ENCODE measurements at regions of chr1 and their contacts with region 1.

Region 1: DNA sequence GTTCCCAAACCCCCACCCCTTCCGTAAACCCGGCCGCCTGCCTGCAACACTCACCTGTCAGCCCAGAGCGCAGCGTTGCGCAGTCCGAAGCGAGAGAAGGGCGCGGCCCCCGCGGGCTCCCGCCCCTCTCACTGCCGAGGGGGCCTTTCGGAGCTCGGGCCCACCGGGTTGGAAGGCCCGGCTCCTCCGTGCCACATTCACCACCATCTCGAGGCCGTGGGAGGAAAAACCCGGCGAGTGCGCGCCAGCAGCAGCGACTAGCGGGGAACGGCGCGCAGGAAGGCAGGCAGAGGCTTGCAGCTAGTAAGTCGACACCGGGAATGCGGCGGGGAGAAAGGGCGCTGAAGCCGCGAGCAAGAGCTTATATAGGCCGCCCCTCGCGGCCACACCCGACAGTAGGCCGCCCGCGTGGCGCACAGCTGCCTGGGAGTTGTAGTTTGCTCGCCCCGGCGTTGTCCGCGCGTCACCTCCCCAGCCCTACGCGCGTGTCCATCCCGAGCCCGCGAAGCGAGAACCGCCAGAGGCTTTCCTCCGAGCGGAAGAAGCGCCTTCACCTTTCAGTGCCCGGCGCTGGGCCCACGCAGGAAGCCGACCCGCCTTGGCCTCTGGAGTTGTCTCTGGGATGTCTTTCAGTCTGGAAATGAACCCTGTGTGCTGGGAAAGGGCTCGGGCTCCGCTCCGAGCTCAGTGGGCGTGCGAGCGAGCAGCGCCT is 10.4 kb upstream of the RAB42 start:
- DNase-seq: peak; percentile 99
- H3K4me3 ChIP-seq: peak overlapping the region; percentile 69 to 96 (median 86)
- H3K27ac ChIP-seq: peak overlapping the region; percentile 82 to 98 (median 94)
- H3K4me1 ChIP-seq: peaks cover 0 to 40% (median 30%) of the 10 kb centered on the region in 4 donors
- H3K27me3 ChIP-seq: no peaks in the 10 kb centered on the region
- CTCF ChIP-seq: no peak
- EP300 ChIP-seq: no peak
- POLR2A ChIP-seq: peak; percentile 93

Region 2: GRCh38 chr1:28552758-28553663 is 28.7 kb before region 1 on chr1 and contains the start of gene TRNAU1AP:
- intact Hi-C with region 1: loop called (anchors 1 kb)
- DNase-seq: peak; percentile 98
- H3K4me3 ChIP-seq: peak within 1 kb of the TSS; percentile 69 to 83 (median 76)
- H3K27ac ChIP-seq: peak within 1 kb of the TSS; percentile 77 to 89 (median 84)
- H3K4me1 ChIP-seq: peaks cover 0 to 20% (median 5%) of the 10 kb centered on the region in 4 donors
- H3K27me3 ChIP-seq: no peaks in the 10 kb centered on the region
- CTCF ChIP-seq: no peak
- EP300 ChIP-seq: peak in 1 of 4 donors; percentile 68
- POLR2A ChIP-seq: peak; percentile 64 to 81
- total RNA-seq, gene TRNAU1AP: 20.0 to 36.5 (median 29.9) TPM